ENCODE measurements at regions of chr1 and their contacts with region 1.

Region 1: DNA sequence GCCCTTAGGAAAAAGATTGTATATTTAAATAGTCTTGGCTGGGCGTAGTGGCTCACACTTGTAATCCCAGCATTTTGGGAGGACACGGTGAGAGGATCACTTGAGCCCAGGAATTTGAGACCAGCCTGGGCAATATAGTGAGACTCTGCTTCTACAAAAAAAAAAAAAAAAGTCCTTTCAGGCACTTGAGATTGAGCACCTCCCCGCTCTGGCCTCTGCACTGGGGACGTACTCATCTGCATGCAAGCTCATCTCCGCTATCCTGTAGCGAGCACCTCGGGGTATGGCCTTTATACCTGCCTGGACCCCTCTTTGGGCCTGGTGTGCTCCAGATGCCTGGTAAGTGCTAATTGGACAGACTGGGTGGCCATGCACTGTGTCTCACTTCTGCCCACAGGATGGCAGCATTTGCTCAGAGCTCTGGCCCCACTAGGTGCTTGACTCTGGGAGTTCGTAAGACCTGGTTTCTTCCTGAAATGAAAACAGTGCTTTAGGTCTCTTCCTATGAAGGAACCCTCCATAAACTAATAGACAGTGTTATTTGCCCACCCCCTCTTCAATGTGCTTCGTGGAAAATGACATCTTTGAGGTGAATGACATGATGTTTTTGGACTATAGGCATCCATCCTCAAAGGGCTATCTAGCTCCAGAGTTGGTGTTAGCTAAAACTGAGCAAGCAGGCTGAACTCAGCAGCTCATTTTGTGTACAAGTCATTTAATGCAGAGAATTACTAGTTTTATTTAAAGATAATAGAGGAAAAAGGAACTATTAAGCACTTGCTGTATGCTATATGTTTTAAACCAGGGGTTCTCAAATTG is 61.7 kb upstream of the ADAR start:
- DNase-seq: peak; percentile 65 to 78
- ATAC-seq: peak; percentile 93 to 99 (median 98)
- H3K4me3 ChIP-seq: no peak overlapping the region
- H3K27ac ChIP-seq: no peak overlapping the region
- H3K4me1 ChIP-seq: no peaks in the 10 kb centered on the region
- H3K27me3 ChIP-seq: no peaks in the 10 kb centered on the region
- CTCF ChIP-seq: peak; percentile 69 to 88 (median 83)

Region 2: DNA sequence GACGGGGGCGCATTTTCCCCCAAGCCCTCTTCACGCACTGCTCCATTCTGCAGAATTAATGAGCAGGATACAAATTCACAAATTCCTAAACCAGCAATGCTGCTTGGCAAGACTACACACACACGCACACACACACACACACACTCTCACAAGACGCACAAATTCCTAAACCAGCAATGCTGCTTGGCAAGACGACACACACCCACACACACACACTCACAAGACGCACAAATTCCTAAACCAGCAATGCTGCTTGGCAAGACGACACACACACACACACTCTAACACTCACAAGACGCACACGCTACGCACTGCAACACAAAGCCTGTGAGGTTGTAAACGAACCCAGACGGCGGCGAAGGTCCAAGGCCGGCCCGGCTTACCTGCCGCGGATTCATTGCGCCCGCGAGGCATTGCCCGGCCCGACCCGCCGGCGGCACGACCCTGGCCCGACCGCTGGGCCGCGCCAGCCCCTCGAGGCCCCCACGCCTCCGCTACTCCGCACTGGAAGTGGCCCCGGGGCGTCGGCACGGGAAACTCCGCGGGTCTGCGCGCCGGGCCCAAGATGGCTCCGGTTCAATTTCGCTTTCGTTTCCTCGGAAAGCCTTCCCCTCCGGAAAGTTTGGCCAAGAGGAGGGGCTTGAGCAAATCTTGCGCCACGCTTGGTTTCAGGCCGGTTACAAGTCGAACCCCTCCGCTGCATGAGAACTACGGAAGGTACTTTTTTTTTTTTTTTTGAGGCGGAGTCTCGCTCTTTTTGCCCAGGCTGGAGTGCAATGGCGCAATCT is 61.9 kb before region 1 on chr1 and contains the start of gene ADAR:
- intact Hi-C with region 1: no loop called
- DNase-seq: peak; percentile 86 to 95
- ATAC-seq: peak; percentile 83 to 95 (median 94)
- H3K4me3 ChIP-seq: peak within 1 kb of the TSS; percentile 66 to 99 (median 90)
- H3K27ac ChIP-seq: peak within 1 kb of the TSS; percentile 87 to 99 (median 98)
- H3K4me1 ChIP-seq: peaks cover 4 to 82% (median 60%) of the 10 kb centered on the region in 9 donors
- H3K27me3 ChIP-seq: no peaks in the 10 kb centered on the region
- CTCF ChIP-seq: no peak
- total RNA-seq, gene ADAR: 45.3 to 103 (median 55.3) TPM

Region 3: GRCh38 chr1:154730259-154730658 is 60.6 kb after region 1 on chr1:
- intact Hi-C with region 1: loop called in 1 of 10 experiments (anchors 10 kb)
- DNase-seq: peak in 1 of 2 donors; percentile 70
- ATAC-seq: peak; percentile 42 to 89 (median 71)
- H3K4me3 ChIP-seq: no peak overlapping the region
- H3K27ac ChIP-seq: peak overlapping the region in 9 of 10 donors; percentile 43 to 91 (median 87)
- H3K4me1 ChIP-seq: peaks cover 7 to 80% (median 47%) of the 10 kb centered on the region in 9 donors
- H3K27me3 ChIP-seq: no peaks in the 10 kb centered on the region
- CTCF ChIP-seq: no peak

Region 4: DNA sequence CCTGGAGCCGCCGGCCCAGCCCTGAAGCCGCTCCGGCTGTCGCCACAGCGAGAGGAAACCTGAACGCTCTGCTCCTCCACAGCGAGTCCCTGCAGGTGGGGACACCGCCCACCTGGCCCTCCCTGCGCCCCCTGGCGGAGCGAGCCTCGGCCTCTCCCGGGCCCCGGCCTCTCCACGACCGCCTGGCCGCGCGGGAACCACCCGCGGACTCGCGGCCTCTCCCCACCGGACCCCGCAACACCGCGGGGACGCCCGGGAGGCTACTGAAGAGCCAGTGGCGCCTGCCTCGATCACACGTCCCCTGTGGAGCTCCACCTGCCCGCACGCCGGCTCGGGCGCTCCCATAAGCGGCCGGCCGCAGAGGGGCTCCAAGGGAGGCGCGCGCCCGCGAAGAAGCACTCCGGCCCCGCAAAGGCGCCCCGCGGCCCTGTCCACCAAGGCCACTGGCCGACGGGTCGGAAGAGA is 90.8 kb after region 1 on chr1:
- intact Hi-C with region 1: loop called in 4 of 10 experiments (anchors 1 to 10 kb)
- DNase-seq: peak; percentile 46 to 77
- ATAC-seq: peak; percentile 75 to 91 (median 86)
- H3K4me3 ChIP-seq: peak overlapping the region; percentile 16 to 61 (median 48)
- H3K27ac ChIP-seq: peak overlapping the region in 4 of 10 donors; percentile 22 to 45 (median 42)
- H3K4me1 ChIP-seq: peaks cover 0 to 35% (median 23%) of the 10 kb centered on the region in 9 donors
- H3K27me3 ChIP-seq: peaks cover 0 to 60% (median 3%) of the 10 kb centered on the region in 7 donors
- CTCF ChIP-seq: peak; percentile 62 to 88 (median 79)

Region 5: GRCh38 chr1:154878371-154879022 is 208.8 kb after region 1 on chr1:
- intact Hi-C with region 1: loop called (anchors 1 to 5 kb)
- DNase-seq: peak; percentile 80 to 81
- ATAC-seq: peak; percentile 92 to 97 (median 96)
- H3K4me3 ChIP-seq: no peak overlapping the region
- H3K27ac ChIP-seq: no peak overlapping the region
- H3K4me1 ChIP-seq: peaks cover 0 to 7% (median 3%) of the 10 kb centered on the region in 9 donors
- H3K27me3 ChIP-seq: no peaks in the 10 kb centered on the region
- CTCF ChIP-seq: peak; percentile 82 to 92 (median 90)

Region 6: DNA sequence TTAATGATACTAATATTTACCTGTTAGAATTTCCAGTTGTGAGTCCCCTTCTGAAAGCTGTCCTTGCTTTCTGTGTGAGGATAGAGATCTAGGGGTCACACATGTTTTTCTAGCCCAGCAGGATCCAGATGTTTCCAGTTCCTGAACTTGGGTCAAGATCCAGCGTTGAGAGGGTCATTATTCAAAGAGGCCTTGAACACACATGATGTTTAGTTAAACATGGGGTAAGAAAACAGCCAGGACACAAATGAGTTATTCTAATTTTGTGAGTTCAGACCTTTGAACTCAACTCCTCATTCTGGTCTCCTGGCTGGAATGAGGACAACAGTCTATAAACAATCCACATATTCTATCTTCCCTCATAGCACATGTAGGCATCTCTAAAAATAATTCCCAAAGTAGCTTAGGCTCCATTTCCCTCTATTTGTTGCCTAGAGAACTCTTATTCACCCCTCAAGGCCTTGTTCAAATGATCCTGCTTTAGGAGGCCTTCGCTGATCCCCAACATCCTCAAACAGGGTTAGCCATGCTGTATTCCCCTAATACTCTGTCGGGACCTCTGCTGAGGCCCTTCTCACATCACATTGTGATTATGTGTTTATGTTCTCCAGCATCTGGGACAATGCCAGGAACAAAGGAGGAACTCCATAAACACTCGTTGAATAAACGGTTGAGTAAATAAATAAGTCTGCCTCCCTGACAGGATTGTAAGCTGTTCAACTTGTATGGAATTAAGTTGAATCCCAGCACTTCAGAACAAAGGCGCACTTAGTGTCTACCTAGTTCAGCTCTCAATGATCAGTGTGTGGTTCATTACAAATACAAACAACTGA is 215.4 kb after region 1 on chr1:
- intact Hi-C with region 1: loop called in 1 of 10 experiments (anchors 5 kb)
- DNase-seq: no peak
- ATAC-seq: peak in 3 of 8 donors; percentile 45 to 47 (median 46)
- H3K4me3 ChIP-seq: no peak overlapping the region
- H3K27ac ChIP-seq: no peak overlapping the region
- H3K4me1 ChIP-seq: peaks cover 2 to 25% (median 14%) of the 10 kb centered on the region in 9 donors
- H3K27me3 ChIP-seq: no peaks in the 10 kb centered on the region
- CTCF ChIP-seq: no peak

Region 7: DNA sequence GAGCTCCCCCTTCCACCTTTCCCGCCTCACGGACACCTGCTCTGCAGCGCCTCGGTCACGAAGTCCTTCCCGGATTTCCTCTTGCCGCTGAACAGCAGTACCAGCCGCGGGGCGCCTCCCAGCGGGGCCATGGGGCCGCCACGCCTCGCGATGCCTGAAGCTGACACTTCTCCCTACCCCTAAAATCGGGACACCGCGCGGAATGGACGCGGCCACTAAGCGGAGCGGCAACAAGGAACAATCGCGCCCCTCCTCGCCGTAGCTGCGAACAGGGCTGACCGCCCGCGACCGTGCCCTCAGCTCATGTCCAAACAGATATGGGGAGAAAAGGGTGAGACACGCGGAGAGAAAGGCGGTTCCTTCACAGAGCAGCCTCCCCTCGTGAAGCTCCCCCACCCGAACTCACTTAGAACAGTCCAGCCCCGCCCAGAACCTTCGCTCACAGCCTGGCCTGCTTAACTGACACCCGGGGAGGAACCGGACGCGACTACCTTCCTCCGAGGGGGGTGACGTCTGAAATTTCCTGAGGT is 266.9 kb after region 1 on chr1 and contains the start of gene PMVK:
- intact Hi-C with region 1: loop called in 1 of 10 experiments (anchors 5 kb)
- DNase-seq: peak; percentile 92 to 98
- ATAC-seq: peak; percentile 92 to 97 (median 96)
- H3K4me3 ChIP-seq: peak within 1 kb of the TSS; percentile 44 to 70 (median 64)
- H3K27ac ChIP-seq: peak within 1 kb of the TSS; percentile 87 to 99 (median 96)
- H3K4me1 ChIP-seq: peaks cover 7 to 43% (median 25%) of the 10 kb centered on the region in 9 donors
- H3K27me3 ChIP-seq: no peaks in the 10 kb centered on the region
- CTCF ChIP-seq: peak in 8 of 9 donors; percentile 11 to 62 (median 36)
- total RNA-seq, gene PMVK: 29.9 to 66.4 (median 39.4) TPM